Psoas muscle (tissue), 8 donors: ENCODE measurements at regions of chr12 and their contacts with region 1.

Region 1: DNA sequence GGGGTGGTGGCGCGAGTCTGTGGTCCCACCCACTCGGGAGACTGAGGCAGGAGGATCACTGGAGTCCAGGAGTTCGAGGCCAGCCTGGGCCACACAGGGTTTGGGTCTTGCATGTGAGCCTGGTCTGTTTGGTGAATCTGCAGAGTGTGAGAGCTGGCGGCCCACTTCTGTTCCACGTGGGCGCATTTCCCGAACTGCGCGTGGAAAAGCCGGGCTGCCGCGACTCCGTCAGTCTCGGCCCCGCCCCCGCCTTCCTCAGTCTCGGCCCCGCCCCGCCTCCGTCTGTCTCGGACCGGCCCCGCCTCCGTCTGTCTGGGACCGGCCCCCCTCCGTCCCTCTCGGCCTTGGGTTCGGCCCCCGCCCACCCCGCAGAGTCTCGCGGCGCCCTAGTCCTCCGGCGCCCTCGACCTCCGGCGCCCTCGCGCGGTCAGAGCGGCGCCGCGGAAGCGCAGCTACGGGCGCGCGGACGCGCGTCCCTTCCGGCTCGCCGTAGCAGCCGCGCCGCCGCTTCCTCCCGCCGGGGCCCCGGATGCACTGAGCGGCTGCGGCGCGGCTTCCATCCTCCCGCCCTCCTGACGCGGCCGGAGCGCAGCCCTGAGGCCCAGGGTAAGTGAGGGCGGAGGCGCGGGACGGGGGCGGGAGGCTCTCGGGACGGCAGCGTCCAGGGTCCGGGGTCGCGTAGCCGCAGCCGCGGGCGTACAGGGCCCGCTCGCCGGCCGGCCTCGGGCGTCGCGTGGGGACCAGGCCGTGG is at the start of gene EP400:
- DNase-seq: peak; percentile 98
- ATAC-seq: peak; percentile 96 to 97 (median 97)
- H3K4me3 ChIP-seq: peak within 1 kb of the TSS; percentile 96
- H3K27ac ChIP-seq: peak within 1 kb of the TSS; percentile 71
- H3K4me1 ChIP-seq: peaks cover 21% of the 10 kb centered on the region
- H3K27me3 ChIP-seq: no peaks in the 10 kb centered on the region
- CTCF ChIP-seq: peak; percentile 42
- total RNA-seq, gene EP400: 18.4 to 24.5 (median 22.9) TPM

Region 2: DNA sequence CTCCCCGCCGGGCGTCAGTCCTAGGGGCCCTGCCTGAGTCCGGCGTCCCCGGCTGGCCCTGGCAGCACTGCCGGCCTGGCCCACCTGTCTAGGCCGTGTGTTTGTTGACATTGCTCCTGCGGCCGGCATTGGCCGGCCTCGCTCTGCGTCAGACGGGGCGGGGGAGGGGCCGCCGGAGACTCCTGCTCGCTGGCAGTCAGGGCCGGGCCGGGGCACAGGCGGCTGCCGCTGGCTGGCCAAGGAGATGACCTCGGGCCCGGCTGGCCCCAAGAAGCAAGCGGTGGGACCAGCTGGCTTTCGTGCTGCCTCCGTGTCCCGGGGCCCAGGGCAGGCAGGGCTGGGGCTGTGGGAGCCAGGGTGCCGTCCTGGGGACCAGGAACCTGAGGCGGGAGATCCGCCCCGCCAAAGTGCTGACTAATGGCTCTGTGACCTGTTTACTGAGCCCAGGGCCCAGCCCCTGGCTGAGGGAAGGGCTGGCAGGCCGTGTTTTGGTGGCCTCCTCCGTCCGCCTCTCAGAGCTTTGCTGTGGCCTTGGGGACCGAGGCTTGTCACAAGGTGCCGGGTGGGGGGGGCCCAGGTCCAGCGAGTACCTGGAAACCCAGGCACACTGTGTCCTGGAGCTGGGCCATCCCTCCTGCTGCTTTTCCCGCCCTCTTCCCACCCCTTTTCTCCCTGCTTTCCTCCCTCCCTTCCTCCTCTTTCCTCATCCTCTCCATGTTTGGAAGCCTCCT is 53.4 kb before region 1 on chr12:
- intact Hi-C with region 1: loop called (anchors 2 to 5 kb)
- DNase-seq: peak; percentile 94 to 97
- ATAC-seq: peak; percentile 85 to 87 (median 86)
- H3K4me3 ChIP-seq: peak overlapping the region; percentile 78
- H3K27ac ChIP-seq: peak overlapping the region; percentile 98
- H3K4me1 ChIP-seq: peaks cover 43% of the 10 kb centered on the region
- H3K27me3 ChIP-seq: no peaks in the 10 kb centered on the region
- CTCF ChIP-seq: no peak

Region 3: GRCh38 chr12:132094381-132094803 is 144.8 kb after region 1 on chr12:
- intact Hi-C with region 1: no loop called
- DNase-seq: no peak
- ATAC-seq: no peak
- H3K4me3 ChIP-seq: no peak overlapping the region
- H3K27ac ChIP-seq: no peak overlapping the region
- H3K4me1 ChIP-seq: no peaks in the 10 kb centered on the region
- H3K27me3 ChIP-seq: no peaks in the 10 kb centered on the region
- CTCF ChIP-seq: no peak

Region 4: DNA sequence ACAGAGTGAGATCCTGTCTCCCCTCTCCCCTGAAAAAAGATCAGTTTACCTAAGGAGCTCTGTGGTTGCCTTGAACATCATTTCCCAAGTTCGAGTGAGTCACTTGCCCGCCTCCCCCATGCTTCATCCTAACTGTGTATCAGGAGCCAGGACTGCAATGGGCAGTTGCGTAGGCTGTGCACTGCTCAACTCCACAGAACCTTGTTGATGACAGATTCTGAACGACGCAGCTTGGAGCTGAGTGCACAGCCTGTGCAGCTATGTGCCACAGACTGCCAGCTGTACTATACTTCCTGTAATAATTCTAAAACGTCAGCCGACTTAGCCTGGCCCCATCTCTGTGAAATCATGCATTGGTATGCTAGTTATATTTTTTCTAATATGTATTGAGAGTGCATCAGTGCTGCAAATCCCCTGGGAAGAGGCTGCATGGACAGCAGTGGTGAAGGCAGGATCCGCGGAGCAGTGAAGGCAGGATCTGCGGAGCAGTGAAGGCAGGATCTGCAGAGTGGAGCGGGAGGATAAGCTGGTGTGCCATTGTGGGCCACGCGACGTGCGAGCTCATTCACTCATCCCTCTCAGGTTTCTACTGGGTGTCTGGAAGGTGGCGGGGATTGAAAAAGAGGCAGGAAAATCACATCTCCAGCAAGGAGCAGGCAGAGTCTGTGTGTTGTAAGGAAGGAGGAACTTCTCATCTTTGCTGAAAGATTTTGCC is 299.0 kb after region 1 on chr12:
- intact Hi-C with region 1: no loop called
- DNase-seq: no peak
- ATAC-seq: no peak
- H3K4me3 ChIP-seq: no peak overlapping the region
- H3K27ac ChIP-seq: no peak overlapping the region
- H3K4me1 ChIP-seq: no peaks in the 10 kb centered on the region
- H3K27me3 ChIP-seq: peaks cover 0 to 24% (median 1%) of the 10 kb centered on the region in 3 donors
- CTCF ChIP-seq: no peak